ENCODE measurements at regions of chr3 and their contacts with region 1.

Region 1: GRCh38 chr3:112043603-112044201 is 9.2 kb downstream of the TMPRSS7 start:
- DNase-seq: peak; percentile 54
- H3K4me3 Mint-ChIP-seq: no peak overlapping the region
- H3K27ac Mint-ChIP-seq: no peak overlapping the region
- H3K4me1 Mint-ChIP-seq: no peaks in the 10 kb centered on the region
- H3K27me3 Mint-ChIP-seq: peaks cover 4% of the 10 kb centered on the region

Region 2: DNA sequence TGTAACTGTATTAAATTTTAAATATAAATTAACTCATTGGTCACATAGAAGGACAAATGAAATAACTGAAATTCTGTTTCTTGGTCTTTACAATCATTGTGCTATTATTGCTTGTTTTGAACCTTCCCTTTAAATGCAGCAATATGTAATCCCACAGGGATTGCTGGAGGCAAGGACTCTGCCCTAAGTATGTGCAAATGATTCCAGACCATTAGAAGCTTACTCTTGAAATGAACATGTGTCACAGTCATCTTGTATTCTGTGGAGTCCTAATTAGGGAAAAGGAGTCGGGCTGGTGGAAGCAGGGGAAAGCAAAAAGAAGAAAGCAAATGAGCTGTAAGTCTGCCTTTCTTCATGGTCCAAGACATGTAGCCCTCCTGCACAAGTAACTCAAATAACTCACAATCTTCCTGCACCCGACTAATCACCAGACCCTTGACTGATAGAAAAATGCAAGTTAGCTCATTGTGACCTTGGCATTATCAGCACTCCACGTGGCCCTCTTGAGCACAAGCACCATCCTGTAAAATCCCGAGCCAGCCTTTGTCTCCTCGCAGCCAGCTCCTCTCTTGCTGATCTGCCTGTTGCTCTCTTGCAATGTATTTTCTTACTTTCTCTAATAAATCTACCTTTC is 11.5 kb before region 1 on chr3:
- CTCF ChIA-PET with region 1: interaction called, 18 read pairs
- DNase-seq: no peak
- H3K4me3 Mint-ChIP-seq: no peak overlapping the region
- H3K27ac Mint-ChIP-seq: no peak overlapping the region
- H3K4me1 Mint-ChIP-seq: no peaks in the 10 kb centered on the region
- H3K27me3 Mint-ChIP-seq: peaks cover 3% of the 10 kb centered on the region